Adrenal gland (tissue), 19 donors: ENCODE measurements at regions of chr4 and their contacts with region 1.

Region 1: GRCh38 chr4:70640192-70640591 is 11.6 kb downstream of the ENAM start:
- DNase-seq: no peak
- H3K4me3 ChIP-seq: no peak overlapping the region
- H3K27ac ChIP-seq: no peak overlapping the region
- H3K4me1 ChIP-seq: no peaks in the 10 kb centered on the region
- H3K27me3 ChIP-seq: no peaks in the 10 kb centered on the region
- CTCF ChIP-seq: no peak
- POLR2A ChIP-seq: no peak

Region 2: DNA sequence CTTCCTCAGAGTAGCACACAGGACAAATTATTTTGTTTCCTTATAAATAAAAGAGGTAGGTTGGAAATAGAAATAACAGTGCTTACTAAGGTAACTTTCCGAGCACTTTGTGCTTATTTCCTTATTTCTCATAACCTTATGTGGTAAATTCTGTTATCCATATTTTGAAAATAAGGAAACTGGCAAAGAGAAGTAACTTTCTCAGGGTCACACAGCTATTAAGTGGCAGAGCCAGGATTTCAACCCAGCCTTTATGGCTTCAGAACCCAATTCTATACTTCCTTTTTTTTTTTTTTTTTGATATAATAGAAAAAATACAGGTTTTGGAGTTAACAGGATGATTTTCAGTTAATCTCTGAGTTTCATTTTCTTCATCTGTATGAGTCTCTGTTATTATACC is 51.5 kb after region 1 on chr4:
- intact Hi-C with region 1: no loop called
- DNase-seq: no peak
- H3K4me3 ChIP-seq: no peak overlapping the region
- H3K27ac ChIP-seq: peak overlapping the region in 1 of 5 donors; percentile 21
- H3K4me1 ChIP-seq: peaks cover 21 to 33% of the 10 kb centered on the region in 2 donors
- H3K27me3 ChIP-seq: no peaks in the 10 kb centered on the region
- CTCF ChIP-seq: no peak
- POLR2A ChIP-seq: no peak

Region 3: DNA sequence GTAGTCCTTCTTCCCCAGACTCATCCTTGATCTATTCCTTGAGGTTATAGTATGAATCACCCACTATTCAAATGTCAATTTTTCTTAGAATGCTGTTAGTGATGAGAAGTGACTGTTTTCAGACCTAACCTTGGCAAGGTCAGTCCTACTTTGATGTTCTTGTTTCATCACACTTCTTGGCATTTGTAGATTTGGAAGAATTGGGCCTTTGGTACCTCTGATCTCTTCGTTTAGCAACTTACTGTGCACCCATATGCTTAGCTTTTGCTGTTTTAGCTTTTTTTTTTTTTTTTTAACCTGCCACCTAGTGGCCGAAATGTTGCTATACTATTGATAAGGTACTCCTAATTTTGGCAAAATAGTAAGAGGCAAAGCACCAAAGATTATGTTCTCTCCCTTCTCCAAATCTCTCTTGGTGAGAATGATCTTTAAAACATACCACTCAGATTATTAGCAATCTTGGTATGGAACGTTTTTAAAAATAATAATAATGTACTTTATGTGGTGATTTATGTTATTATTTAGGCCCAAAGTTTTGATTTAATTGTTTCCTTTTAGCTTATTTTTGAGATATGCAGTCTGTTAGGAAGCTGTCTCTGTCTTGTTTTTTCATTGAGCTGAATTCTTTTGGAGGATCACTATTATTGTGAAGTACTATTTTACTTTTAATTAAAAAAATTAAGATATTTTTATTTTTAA is 369.8 kb after region 1 on chr4:
- intact Hi-C with region 1: loop called in 1 of 2 experiments (anchors 10 kb)
- DNase-seq: no peak
- H3K4me3 ChIP-seq: no peak overlapping the region
- H3K27ac ChIP-seq: peak overlapping the region in 1 of 5 donors; percentile 17
- H3K4me1 ChIP-seq: peaks cover 17 to 23% of the 10 kb centered on the region in 2 donors
- H3K27me3 ChIP-seq: no peaks in the 10 kb centered on the region
- CTCF ChIP-seq: peak; percentile 37 to 84 (median 60)
- POLR2A ChIP-seq: no peak